HEK293 (cell line): ENCODE measurements at regions of chr12 and their contacts with region 1.

Region 1: GRCh38 chr12:43921666-43922337 is 85.9 kb downstream of the TMEM117 start:
- H3K4me3 ChIP-seq: no peak overlapping the region
- H3K27ac ChIP-seq: no peak overlapping the region
- H3K4me1 ChIP-seq: no peaks in the 10 kb centered on the region
- CTCF ChIP-seq: no peak

Region 2: DNA sequence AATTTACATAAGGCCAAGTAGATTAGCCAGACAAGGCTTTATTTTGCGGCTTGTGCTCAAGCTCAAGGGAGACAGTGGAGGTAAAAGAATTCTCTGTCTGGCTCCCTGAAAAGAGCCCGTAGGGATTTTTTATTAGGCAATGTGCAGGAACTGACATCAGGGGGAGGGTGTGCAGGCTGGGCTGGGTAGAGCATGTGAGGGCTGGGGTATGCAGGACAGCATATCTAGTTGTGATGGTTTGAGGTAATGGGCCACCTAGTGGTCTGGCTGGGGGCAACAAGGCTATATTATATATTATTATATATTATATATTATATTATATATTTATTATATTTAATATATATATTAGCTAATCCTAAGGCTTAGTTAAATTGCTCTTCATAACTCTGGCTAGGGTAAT is 16.1 kb after region 1 on chr12:
- CTCF ChIA-PET with region 1: interaction called, 10 read pairs
- POLR2A ChIA-PET with region 1: no interaction called
- H3K4me3 ChIP-seq: no peak overlapping the region
- H3K27ac ChIP-seq: no peak overlapping the region
- H3K4me1 ChIP-seq: no peaks in the 10 kb centered on the region
- CTCF ChIP-seq: no peak